ENCODE measurements at regions of chr16 and their contacts with region 1.

Region 1: GRCh38 chr16:234468-235305 is at the start of gene FAM234A:
- DNase-seq: peak; percentile 92 to 95 (median 94)
- H3K4me3 ChIP-seq: peak within 1 kb of the TSS; percentile 90
- H3K27ac ChIP-seq: peak within 1 kb of the TSS; percentile 85 to 88
- H3K4me1 ChIP-seq: peaks cover 1% of the 10 kb centered on the region
- H3K27me3 ChIP-seq: no peaks in the 10 kb centered on the region
- CTCF ChIP-seq: peak; percentile 25 to 80 (median 71)
- EP300 ChIP-seq: peak; percentile 69
- POLR2A ChIP-seq: peak; percentile 96
- total RNA-seq, gene FAM234A: 20.4 to 61.9 (median 49.2) TPM

Region 2: GRCh38 chr16:297832-298417 is 63.2 kb after region 1 on chr16:
- intact Hi-C with region 1: no loop called
- DNase-seq: no peak
- H3K4me3 ChIP-seq: no peak overlapping the region
- H3K27ac ChIP-seq: no peak overlapping the region
- H3K4me1 ChIP-seq: no peaks in the 10 kb centered on the region
- H3K27me3 ChIP-seq: no peaks in the 10 kb centered on the region
- CTCF ChIP-seq: no peak
- EP300 ChIP-seq: no peak
- POLR2A ChIP-seq: no peak

Region 3: DNA sequence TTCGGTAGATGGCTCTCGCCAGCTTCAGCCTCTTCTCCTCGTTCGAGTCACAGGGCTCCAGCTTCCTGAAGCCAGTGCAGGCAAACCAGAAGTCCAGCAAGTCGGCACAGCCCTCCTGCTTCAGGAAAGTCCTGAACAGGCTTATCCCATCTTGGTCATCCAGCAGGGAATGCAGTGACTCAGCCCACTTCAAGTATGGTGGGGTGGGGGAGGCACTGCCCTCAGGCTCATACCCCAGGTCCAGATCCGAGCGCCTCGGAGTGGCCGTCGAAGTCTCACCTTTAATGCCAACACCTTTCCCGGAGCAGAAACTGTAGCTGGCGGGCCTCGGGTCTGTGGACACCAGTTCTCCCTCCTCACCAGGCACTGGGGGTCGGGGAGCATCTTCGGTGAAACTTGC is 111.9 kb after region 1 on chr16:
- intact Hi-C with region 1: loop called in 2 of 4 experiments (anchors 5 to 10 kb)
- DNase-seq: no peak
- H3K4me3 ChIP-seq: no peak overlapping the region
- H3K27ac ChIP-seq: no peak overlapping the region
- H3K4me1 ChIP-seq: peaks cover 4% of the 10 kb centered on the region
- H3K27me3 ChIP-seq: no peaks in the 10 kb centered on the region
- CTCF ChIP-seq: no peak
- EP300 ChIP-seq: no peak
- POLR2A ChIP-seq: no peak

Region 4: GRCh38 chr16:352547-353403 is 118.1 kb after region 1 on chr16 and contains the start of gene AXIN1:
- intact Hi-C with region 1: loop called in 2 of 4 experiments (anchors 5 to 10 kb)
- DNase-seq: peak; percentile 100
- H3K4me3 ChIP-seq: peak within 1 kb of the TSS; percentile 64
- H3K27ac ChIP-seq: peak within 1 kb of the TSS; percentile 59 to 73
- H3K4me1 ChIP-seq: no peaks in the 10 kb centered on the region
- H3K27me3 ChIP-seq: no peaks in the 10 kb centered on the region
- CTCF ChIP-seq: peak in 2 of 3 donors; percentile 32 to 69
- EP300 ChIP-seq: no peak
- POLR2A ChIP-seq: peak; percentile 43
- total RNA-seq, gene AXIN1: 13.7 to 27.2 (median 24.0) TPM